ENCODE measurements at regions of chr19 and their contacts with region 1.

Region 1: DNA sequence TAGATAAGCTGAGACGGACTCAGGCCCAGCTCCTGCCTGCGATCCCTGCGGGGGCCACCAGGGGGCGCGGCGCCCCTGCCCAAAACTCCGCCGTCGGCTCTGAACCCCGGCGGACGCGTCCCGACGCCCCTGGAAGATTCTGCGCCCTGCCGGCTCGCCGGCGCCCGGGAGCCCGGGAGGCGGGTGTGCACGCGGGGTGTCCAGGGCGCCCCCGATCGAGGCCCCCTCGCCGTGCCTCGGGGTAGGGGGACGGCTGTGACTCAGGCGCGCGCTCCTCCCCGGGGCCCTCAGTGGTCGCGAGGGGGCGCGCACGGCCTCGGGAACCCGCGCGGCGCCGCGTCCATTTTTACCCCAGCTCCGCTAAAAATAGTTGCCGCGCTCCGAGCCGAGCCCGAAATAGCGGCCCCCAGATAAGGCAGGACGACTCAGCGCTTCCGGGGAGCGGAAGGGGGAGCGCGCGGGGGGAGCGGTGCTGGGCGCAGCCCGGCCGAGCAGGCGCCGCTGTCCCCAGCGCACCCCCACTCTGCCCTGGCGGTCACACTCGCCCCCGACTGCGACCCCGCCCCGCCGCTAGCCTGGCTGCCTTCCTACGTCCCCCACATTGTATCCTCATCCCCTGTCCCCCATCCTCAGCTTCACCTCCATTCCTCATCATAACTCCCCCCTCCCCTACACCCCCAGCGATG is 16.0 kb upstream of the ERCC1 start:
- DNase-seq: peak; percentile 87
- H3K4me3 Mint-ChIP-seq: peak overlapping the region; percentile 64
- H3K27ac Mint-ChIP-seq: peak overlapping the region; percentile 67
- H3K4me1 Mint-ChIP-seq: peaks cover 41% of the 10 kb centered on the region
- H3K27me3 Mint-ChIP-seq: peaks cover 21% of the 10 kb centered on the region

Region 2: DNA sequence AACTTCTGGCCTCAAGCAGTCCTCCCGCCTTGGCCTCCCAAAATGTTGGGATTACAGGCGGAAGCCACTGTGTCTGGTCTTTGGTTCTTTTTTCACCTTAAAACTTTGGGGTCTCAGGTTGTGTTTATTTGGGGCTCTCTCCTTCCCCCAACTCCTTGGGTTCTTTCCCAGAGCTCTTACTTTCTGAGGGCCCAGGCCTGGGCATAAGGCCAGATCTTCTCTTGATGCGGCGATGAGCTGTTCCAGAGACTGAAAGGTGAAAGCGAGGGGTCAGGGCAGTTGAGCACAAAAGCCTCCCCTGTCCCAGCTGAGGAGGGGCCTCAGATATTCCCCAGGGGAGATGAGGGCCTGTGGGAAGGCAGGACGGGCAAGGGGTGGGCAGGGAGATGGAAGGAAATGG is 26.2 kb before region 1 on chr19:
- CTCF ChIA-PET with region 1: no interaction called
- DNase-seq: no peak
- H3K4me3 Mint-ChIP-seq: no peak overlapping the region
- H3K27ac Mint-ChIP-seq: no peak overlapping the region
- H3K4me1 Mint-ChIP-seq: peaks cover 12% of the 10 kb centered on the region
- H3K27me3 Mint-ChIP-seq: no peaks in the 10 kb centered on the region

Region 3: DNA sequence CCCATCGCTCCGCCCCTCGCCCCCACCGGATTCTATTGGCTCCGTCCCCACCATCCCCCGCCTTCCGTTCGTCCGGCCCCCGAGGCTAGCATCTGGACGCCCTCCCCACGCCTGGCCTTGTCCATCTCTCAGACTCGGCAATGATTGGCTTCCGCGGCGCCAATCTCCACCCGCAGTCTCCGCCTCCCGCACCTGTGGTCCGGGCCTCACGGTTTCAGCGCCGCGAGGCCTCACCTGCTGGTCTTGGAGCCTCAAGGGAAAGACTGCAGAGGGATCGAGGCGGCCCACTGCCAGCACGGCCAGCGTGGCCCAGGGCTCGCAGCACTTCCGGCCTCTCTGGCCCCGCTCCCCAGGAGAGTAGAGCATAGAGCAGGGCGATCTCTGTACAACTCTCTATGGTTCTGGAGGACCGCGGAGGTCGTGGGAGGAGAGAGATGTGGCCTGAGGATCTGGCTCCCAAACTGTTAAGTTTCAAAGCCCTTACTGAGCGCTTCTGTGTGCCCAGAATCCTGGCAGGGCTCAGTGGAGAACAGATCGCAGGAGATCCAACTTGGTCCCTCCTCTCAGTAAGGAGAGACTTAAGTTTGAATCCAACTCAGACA is 16.0 kb before region 1 on chr19 and contains the start of gene ERCC1:
- CTCF ChIA-PET with region 1: interaction called, 11 read pairs
- DNase-seq: peak; percentile 95
- H3K4me3 Mint-ChIP-seq: peak within 1 kb of the TSS; percentile 94
- H3K27ac Mint-ChIP-seq: peak within 1 kb of the TSS; percentile 97
- H3K4me1 Mint-ChIP-seq: peaks cover 70% of the 10 kb centered on the region
- H3K27me3 Mint-ChIP-seq: peaks cover 22% of the 10 kb centered on the region

Region 4: GRCh38 chr19:45450012-45450333 is 10.3 kb after region 1 on chr19:
- CTCF ChIA-PET with region 1: interaction called, 16 read pairs
- DNase-seq: peak; percentile 31
- H3K4me3 Mint-ChIP-seq: peak overlapping the region; percentile 87
- H3K27ac Mint-ChIP-seq: peak overlapping the region; percentile 97
- H3K4me1 Mint-ChIP-seq: peaks cover 45% of the 10 kb centered on the region
- H3K27me3 Mint-ChIP-seq: peaks cover 11% of the 10 kb centered on the region

Region 5: GRCh38 chr19:45469132-45469944 is 29.6 kb after region 1 on chr19:
- CTCF ChIA-PET with region 1: interaction called, 32 read pairs
- DNase-seq: peak; percentile 95
- H3K4me3 Mint-ChIP-seq: peak overlapping the region; percentile 88
- H3K27ac Mint-ChIP-seq: peak overlapping the region; percentile 93
- H3K4me1 Mint-ChIP-seq: peaks cover 40% of the 10 kb centered on the region
- H3K27me3 Mint-ChIP-seq: peaks cover 87% of the 10 kb centered on the region

Region 6: GRCh38 chr19:45478454-45479238 is 38.9 kb after region 1 on chr19:
- CTCF ChIA-PET with region 1: interaction called, 229 read pairs
- DNase-seq: peak; percentile 93
- H3K4me3 Mint-ChIP-seq: peak overlapping the region; percentile 78
- H3K27ac Mint-ChIP-seq: peak overlapping the region; percentile 97
- H3K4me1 Mint-ChIP-seq: peaks cover 39% of the 10 kb centered on the region
- H3K27me3 Mint-ChIP-seq: peaks cover 49% of the 10 kb centered on the region

Region 7: GRCh38 chr19:45485305-45486077 is 45.8 kb after region 1 on chr19:
- CTCF ChIA-PET with region 1: interaction called, 229 read pairs
- DNase-seq: peak; percentile 99
- H3K4me3 Mint-ChIP-seq: peak overlapping the region; percentile 89
- H3K27ac Mint-ChIP-seq: peak overlapping the region; percentile 83
- H3K4me1 Mint-ChIP-seq: peaks cover 16% of the 10 kb centered on the region
- H3K27me3 Mint-ChIP-seq: peaks cover 31% of the 10 kb centered on the region